H1 (cell line): ENCODE measurements at regions of chr20 and their contacts with region 1.

Region 1: DNA sequence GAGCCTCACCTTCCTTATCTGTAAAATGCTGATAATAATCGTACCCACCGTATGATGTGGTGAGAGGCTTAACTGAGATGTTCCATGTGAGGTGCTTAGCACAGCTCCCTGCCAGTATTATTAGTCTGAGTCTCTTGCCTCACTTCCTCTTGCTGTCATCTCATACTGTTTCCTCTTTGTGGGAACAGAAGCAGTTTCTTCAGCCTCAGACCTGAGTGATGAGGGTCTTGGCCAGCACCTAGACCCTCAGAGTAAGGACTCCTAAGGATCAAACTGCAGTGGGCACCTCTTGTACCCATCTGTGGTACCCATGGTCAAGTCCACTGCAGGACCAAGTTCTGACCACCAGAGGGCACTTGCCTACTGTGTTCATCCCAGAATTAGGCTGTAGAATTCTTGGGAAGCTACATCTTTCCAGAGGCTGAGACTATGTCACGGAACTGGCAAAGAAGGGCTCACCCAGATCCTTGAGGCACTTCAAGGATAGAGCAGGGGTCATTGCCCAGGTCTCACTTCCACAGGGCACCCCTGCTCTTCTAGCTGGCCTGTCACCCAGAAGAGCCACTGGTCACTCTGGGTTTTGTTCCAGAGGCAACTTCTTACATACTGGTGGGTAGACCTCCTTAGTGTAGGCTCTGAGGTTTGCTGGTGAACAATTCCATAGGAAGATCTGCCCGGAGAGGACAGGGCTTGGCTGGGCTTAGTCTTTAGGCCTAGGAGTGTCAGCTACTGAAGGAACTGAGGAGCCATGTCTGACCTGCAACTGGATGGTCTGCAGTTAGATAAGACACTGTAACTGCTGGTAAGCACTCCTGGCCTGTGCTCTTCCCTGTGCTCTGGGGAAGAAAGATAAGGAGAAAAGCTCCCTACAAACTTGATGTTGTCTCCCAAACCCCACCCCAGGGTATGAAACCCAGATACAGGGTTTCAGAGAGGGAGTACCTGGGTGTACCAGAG is 20.6 kb upstream of the SGK2 start:
- DNase-seq: peak in 1 of 2 experiments; percentile 86
- H3K4me3 ChIP-seq: no peak overlapping the region
- H3K27ac ChIP-seq: no peak overlapping the region
- H3K4me1 ChIP-seq: no peaks in the 10 kb centered on the region
- H3K27me3 ChIP-seq: no peaks in the 10 kb centered on the region
- CTCF ChIP-seq: peak; percentile 78 to 96 (median 81)
- EP300 ChIP-seq: no peak
- POLR2A ChIP-seq: no peak
- RAD21 ChIP-seq: peak; percentile 89 to 91

Region 2: GRCh38 chr20:43448748-43449535 is 89.3 kb before region 1 on chr20:
- CTCF ChIA-PET with region 1: interaction called, 15 read pairs
- POLR2A ChIA-PET with region 1: interaction called, 23 read pairs
- DNase-seq: peak in 1 of 2 experiments; percentile 60
- H3K4me3 ChIP-seq: no peak overlapping the region
- H3K27ac ChIP-seq: no peak overlapping the region
- H3K4me1 ChIP-seq: no peaks in the 10 kb centered on the region
- H3K27me3 ChIP-seq: no peaks in the 10 kb centered on the region; a peak in 1 of 7 replicates
- CTCF ChIP-seq: peak; percentile 64 to 78 (median 74)
- EP300 ChIP-seq: no peak
- POLR2A ChIP-seq: no peak
- RAD21 ChIP-seq: peak; percentile 89

Region 3: GRCh38 chr20:43472671-43473380 is 65.4 kb before region 1 on chr20:
- CTCF ChIA-PET with region 1: no interaction called
- POLR2A ChIA-PET with region 1: no interaction called
- DNase-seq: no peak
- H3K4me3 ChIP-seq: no peak overlapping the region
- H3K27ac ChIP-seq: no peak overlapping the region
- H3K4me1 ChIP-seq: no peaks in the 10 kb centered on the region
- H3K27me3 ChIP-seq: no peaks in the 10 kb centered on the region
- CTCF ChIP-seq: peak in 2 of 3 experiments; percentile 9 to 34; a peak in 2 of 4 replicates
- EP300 ChIP-seq: no peak
- POLR2A ChIP-seq: no peak
- RAD21 ChIP-seq: peak in 1 of 2 experiments; percentile 7; a peak in 2 of 4 replicates

Region 4: DNA sequence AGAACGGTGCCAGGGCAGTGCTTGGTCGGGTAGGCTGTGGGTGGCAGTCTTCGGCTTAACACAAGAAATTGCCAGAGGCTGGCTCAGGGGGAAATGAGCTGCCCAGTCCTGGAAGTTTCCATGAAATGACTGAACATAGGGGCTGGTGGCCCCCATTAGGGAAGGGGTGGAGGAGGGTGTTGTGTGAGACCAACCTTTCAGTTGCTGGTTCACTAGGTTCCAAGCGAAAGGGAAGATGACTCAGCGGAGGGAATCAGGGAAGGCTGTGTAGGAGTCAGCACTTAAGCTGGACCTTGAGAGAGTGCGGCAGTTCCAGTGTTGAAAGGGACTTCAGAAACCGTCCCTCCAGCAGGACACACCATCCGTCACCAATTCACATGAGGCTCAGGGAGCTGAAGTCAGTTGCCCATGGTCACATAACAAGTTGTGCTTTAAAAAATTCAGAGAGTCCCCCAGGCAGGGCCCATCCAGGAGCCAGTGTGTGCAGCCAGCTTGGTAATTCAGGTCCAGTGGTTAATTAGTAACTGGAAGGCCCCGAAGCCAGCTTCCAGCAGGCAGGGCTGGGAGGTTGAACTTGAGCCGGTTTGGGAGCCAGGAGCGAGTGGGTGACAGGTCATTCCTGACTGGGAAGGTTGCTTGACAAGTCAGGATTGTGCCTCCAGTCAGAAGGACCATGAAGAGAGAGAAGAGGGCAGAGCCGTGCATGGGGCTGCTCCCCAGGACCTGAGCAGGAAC is 20.4 kb after region 1 on chr20 and contains the start of gene SGK2:
- CTCF ChIA-PET with region 1: interaction called, 13 read pairs
- POLR2A ChIA-PET with region 1: no interaction called
- DNase-seq: no peak
- H3K4me3 ChIP-seq: no peak within 1 kb of the TSS
- H3K27ac ChIP-seq: no peak within 1 kb of the TSS
- H3K4me1 ChIP-seq: no peaks in the 10 kb centered on the region
- H3K27me3 ChIP-seq: no peaks in the 10 kb centered on the region
- CTCF ChIP-seq: no peak
- EP300 ChIP-seq: no peak
- POLR2A ChIP-seq: no peak
- RAD21 ChIP-seq: no peak
- total RNA-seq, gene SGK2: 0.23 TPM in 1 of 2 replicates, not detected in the other

Region 5: DNA sequence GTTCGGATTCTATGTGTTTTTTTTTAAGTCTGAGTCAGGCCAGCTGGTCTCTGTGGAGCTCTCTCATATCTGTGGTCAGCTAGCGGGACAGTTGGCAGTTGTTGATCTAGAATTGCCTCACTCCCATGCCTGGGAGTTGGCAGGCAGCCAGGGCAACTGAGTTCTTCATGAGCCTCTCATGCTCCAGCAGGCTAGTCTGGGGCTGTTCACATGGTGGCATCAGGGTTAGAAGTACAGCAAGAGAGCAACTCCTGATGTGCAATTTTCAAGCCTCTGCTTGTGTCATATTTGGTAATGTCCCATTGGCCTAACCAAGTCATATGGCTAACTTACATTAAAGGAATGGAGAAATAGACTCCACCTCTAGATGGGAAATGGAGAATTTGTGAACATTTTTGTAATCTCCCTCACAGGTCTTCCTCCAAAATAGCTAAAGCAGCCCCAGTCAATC is 45.8 kb after region 1 on chr20:
- CTCF ChIA-PET with region 1: interaction called, 12 read pairs
- POLR2A ChIA-PET with region 1: no interaction called
- DNase-seq: no peak
- H3K4me3 ChIP-seq: no peak overlapping the region
- H3K27ac ChIP-seq: no peak overlapping the region
- H3K4me1 ChIP-seq: peaks cover 0 to 8% (median 6%) of the 10 kb centered on the region in 4 experiments; a peak in 3 of 7 replicates
- H3K27me3 ChIP-seq: no peaks in the 10 kb centered on the region
- CTCF ChIP-seq: no peak
- EP300 ChIP-seq: no peak
- POLR2A ChIP-seq: no peak
- RAD21 ChIP-seq: no peak

Region 6: GRCh38 chr20:43691928-43692524 is 153.8 kb after region 1 on chr20:
- CTCF ChIA-PET with region 1: interaction called, 49 read pairs
- POLR2A ChIA-PET with region 1: no interaction called
- DNase-seq: peak; percentile 25 to 78
- H3K4me3 ChIP-seq: no peak overlapping the region
- H3K27ac ChIP-seq: no peak overlapping the region
- H3K4me1 ChIP-seq: peaks cover 0 to 2% (median 0%) of the 10 kb centered on the region in 4 experiments; a peak in 1 of 7 replicates
- H3K27me3 ChIP-seq: no peaks in the 10 kb centered on the region
- CTCF ChIP-seq: peak; percentile 59 to 61 (median 61)
- EP300 ChIP-seq: no peak
- POLR2A ChIP-seq: no peak
- RAD21 ChIP-seq: peak; percentile 63 to 74